ENCODE measurements at regions of chr9 and their contacts with region 1.

Region 1: DNA sequence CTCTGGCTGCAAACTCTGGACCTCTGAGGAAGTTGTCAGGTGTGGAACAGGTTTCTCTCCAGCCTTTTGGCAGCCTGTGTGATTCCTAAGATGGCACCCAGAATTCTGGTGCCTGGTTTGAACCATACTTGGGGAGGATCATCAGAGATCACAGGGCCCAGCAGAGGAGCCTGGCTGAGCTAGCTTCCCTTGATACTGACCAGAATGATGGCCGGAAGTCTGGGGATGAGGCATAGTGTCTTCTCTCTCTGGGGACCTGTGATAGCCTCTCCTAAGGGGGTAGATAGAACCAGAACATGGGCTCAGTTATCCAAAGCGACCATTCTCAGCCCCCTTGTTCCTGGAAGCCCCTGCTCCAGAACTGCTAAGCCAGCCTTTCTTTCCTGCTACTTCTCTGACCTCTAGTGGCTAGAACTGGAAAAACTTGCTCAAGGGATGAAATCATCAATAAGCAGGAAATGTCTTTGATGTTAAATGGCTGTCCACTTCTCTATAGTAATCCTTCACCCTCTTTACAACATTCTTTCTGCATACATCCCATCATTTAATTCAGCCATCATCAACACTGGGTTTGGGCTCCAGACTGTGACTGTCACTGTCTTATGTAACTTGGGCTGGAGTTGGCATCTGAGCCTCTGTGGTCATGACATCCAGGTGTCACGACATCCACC is 55.1 kb downstream of the C9orf152 start:
- DNase-seq: no peak
- ATAC-seq: peak in 1 of 2 donors; percentile 60
- H3K4me3 ChIP-seq: no peak overlapping the region
- H3K27ac ChIP-seq: peak overlapping the region; percentile 0
- H3K4me1 ChIP-seq: peaks cover 88% of the 10 kb centered on the region
- H3K27me3 ChIP-seq: no peaks in the 10 kb centered on the region
- CTCF ChIP-seq: peak; percentile 73

Region 2: DNA sequence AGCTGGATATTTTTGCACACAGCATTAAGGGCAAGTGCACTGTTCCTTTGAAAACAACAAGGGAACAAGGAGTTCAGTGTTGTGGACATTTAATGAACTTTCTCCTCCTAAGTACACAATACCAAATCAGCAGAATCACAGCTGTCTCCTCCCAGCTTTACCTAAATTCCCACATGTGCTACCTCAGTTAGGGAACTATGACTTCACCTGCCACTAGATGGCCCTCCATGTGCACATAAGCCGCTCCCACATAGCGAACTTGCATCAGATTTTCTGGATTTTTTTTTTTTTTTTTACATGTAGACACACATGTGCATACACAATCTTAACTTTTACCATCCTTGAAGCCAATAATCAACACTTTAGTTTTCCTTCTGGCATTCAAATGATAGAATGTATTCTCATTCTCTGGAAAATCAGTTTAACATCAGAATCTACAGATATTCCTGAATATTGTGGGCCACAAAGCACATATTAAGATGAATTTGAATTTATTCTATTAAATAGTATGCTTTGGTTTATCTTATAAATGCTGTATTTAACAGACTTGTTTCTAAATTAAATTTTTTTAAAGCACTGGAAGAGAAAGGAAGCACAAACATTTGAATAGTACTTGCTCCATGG is 249.2 kb before region 1 on chr9:
- intact Hi-C with region 1: loop called (anchors 10 kb)
- DNase-seq: no peak
- ATAC-seq: peak; percentile 63 to 80
- H3K4me3 ChIP-seq: no peak overlapping the region
- H3K27ac ChIP-seq: no peak overlapping the region
- H3K4me1 ChIP-seq: peaks cover 35% of the 10 kb centered on the region
- H3K27me3 ChIP-seq: no peaks in the 10 kb centered on the region
- CTCF ChIP-seq: peak; percentile 80

Region 3: DNA sequence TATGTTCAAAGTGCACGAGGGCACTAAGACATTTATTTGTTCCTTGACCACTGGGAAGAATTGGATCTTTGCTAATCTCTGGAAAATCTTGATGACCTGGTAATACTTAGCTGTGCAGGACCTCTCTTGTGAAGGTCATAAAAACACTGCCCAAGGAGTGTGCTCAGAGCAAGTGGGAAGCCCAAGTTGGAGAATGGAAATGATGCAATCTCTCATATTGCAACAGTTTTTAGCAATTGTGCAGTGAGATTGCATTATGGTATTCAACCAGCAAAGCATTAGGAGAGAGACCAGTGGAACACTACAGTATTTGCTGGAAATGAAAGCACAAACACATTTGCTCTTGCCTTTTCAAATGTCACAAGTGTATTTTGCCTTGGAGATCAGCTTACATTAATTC is 150.3 kb after region 1 on chr9:
- intact Hi-C with region 1: no loop called
- DNase-seq: no peak
- ATAC-seq: peak; percentile 48
- H3K4me3 ChIP-seq: no peak overlapping the region
- H3K27ac ChIP-seq: no peak overlapping the region
- H3K4me1 ChIP-seq: no peaks in the 10 kb centered on the region
- H3K27me3 ChIP-seq: no peaks in the 10 kb centered on the region
- CTCF ChIP-seq: no peak

Measured in lower lobe of right lung (tissue), 2 donors.